ENCODE measurements at regions of chr6 and their contacts with region 1.

Region 1: DNA sequence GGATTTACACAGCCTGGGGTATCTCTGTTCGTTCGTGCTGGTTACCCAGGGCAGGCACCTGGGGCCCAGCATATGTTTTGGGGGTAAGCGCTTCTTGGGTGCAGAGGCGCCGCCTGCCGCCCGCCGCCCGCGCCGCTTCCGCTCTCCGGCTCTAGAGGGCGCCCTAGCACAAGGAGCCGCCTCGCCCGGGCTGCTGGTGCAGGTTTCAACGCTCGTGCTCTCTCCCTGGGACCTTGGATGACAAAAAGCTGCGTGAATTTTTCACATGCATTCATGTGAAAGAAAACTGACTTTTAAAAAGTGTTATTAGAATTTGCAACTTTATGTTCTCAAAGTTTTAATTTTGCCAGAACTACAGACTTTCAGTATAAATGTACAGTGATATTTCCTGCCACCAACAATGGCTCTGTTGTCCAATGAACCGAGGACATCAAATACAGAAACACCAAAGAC is 32.5 kb downstream of the PRR18 start:
- DNase-seq: peak; percentile 7
- ATAC-seq: peak; percentile 85
- H3K4me3 ChIP-seq: no peak overlapping the region
- H3K27ac ChIP-seq: no peak overlapping the region
- H3K4me1 ChIP-seq: no peaks in the 10 kb centered on the region
- H3K27me3 ChIP-seq: no peaks in the 10 kb centered on the region
- CTCF ChIP-seq: peak; percentile 100

Region 2: DNA sequence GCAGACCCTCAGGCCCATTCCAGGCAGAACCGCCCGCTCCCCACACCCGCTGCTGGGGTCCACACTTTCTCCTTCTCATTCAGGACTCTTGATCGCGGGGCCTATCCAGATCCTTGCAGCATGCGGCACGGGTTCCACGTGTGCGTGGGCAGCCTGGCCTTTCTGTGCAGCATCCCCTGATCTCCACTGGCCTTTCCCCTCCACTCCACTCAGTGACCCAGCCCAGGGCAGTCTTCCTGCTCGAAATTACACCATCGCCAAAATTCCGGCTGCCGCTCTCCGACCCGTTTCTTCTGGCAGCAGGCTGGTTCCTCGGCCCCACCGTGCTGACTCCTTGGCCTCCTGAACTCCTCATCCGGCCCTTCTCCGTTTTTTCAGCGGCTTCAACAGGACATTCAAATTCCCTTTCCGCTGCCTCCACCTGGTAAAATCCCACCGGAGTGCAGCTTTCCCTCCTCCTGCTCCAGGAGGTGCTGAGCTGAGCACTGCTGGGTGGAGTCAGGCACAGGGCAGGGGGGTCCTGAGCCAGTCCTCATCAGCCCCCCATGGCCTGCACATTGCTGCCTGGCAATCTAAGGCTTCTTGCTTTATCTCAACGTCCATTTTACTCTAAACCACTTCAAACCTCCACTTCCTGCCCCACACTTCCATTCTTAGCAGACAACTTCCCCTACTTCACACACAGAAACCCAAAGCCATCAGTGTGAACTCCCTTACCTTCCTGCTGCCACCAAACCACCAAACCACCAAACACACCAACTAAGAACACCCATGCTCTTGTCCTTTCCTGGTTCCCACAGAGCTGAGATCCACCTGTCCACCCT is 57.6 kb after region 1 on chr6:
- CTCF ChIA-PET with region 1: no interaction called
- POLR2A ChIA-PET with region 1: no interaction called
- in situ Hi-C with region 1: no loop called
- intact Hi-C with region 1: no loop called
- DNase-seq: no peak
- ATAC-seq: no peak
- H3K4me3 ChIP-seq: no peak overlapping the region
- H3K27ac ChIP-seq: no peak overlapping the region
- H3K4me1 ChIP-seq: no peaks in the 10 kb centered on the region
- H3K27me3 ChIP-seq: no peaks in the 10 kb centered on the region
- CTCF ChIP-seq: no peak

Region 3: DNA sequence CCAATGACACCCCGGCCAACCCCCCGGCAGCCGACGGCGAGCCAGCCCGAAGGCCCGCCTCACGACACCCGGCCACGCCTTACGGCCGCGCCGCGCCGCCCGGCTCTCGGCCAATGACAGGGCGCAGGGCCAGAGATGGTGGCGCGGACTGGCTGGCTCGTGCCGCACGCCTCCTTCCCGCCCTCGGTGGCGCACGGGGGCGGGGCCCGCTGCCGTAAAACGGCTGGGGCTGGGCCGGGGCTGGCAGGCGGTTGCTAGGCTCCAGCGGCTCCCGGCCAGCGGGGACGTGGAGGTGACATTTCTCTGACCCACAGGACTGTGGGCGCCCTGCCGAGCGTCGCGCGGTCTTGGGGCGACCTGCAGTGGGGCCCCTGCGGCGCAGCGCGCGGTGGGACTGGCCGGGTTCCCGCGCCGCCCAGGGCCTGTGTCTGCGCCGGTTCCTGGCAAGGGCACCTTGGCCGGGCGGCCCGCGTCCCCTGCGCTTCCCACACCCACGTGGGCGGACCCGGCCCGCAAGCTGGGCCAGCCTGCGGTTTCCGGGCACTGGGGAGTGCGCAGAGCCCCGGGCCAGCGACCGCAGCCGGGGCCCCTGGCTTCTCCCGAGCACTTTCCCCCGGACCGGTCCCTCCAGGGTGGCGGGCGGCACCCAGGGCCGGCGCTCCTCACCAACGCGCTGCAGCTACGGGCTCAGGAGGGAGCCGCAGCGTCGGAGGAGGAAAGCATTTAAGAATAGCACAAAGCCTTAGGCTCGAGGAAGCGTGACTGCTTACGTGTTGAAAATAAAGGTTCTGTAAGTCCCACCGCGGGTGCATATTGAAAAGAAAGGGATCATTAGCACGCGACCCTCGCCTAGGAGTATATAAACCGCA is 107.4 kb after region 1 on chr6 and contains the start of gene MPC1:
- CTCF ChIA-PET with region 1: interaction called, 3 read pairs
- POLR2A ChIA-PET with region 1: no interaction called
- in situ Hi-C with region 1: no loop called
- intact Hi-C with region 1: loop called (anchors 5 kb)
- DNase-seq: peak; percentile 68
- ATAC-seq: peak; percentile 99
- H3K4me3 ChIP-seq: peak within 1 kb of the TSS; percentile 65 to 93
- H3K27ac ChIP-seq: peak within 1 kb of the TSS; percentile 62
- H3K4me1 ChIP-seq: no peaks in the 10 kb centered on the region
- H3K27me3 ChIP-seq: no peaks in the 10 kb centered on the region; the same call in 1 of the 2 replicates
- CTCF ChIP-seq: no peak
- total RNA-seq, gene MPC1: 7.0 TPM

Region 4: DNA sequence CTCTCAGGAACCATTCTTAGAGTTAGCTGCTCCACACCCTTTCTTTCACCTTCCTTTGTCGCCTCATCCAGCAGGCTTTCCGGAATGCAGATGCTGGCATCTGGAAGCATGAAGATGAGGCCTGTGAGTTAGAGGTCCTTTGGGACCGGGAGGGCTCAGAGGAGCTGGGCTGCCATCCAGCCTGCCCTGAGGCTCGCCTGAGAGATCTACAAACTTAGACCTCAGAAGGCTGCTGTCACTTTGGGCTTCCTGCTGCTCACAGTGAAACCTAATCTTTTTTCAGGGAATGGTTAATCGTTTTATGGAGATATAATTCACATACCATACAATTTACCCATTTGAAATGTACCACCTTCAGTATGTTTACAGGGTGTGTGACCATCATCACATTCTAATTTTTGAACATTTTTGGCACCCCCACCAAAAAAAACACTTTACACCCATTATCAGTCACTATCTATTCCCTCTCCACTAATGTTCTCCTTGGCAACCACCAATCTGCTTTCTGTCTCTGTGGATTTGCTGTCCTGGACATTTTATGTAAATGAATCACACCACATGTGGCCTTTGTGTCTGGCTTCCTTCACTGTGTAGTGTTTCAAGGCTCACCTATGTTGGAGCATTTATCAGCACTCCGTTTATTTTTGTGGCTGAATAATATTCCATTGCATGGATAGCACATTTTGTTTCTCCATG is 127.0 kb after region 1 on chr6:
- CTCF ChIA-PET with region 1: interaction called, 10 read pairs
- POLR2A ChIA-PET with region 1: no interaction called
- in situ Hi-C with region 1: no loop called
- intact Hi-C with region 1: loop called (anchors 1 kb)
- DNase-seq: no peak
- ATAC-seq: no peak
- H3K4me3 ChIP-seq: no peak overlapping the region
- H3K27ac ChIP-seq: no peak overlapping the region
- H3K4me1 ChIP-seq: no peaks in the 10 kb centered on the region
- H3K27me3 ChIP-seq: no peaks in the 10 kb centered on the region
- CTCF ChIP-seq: no peak

Region 5: DNA sequence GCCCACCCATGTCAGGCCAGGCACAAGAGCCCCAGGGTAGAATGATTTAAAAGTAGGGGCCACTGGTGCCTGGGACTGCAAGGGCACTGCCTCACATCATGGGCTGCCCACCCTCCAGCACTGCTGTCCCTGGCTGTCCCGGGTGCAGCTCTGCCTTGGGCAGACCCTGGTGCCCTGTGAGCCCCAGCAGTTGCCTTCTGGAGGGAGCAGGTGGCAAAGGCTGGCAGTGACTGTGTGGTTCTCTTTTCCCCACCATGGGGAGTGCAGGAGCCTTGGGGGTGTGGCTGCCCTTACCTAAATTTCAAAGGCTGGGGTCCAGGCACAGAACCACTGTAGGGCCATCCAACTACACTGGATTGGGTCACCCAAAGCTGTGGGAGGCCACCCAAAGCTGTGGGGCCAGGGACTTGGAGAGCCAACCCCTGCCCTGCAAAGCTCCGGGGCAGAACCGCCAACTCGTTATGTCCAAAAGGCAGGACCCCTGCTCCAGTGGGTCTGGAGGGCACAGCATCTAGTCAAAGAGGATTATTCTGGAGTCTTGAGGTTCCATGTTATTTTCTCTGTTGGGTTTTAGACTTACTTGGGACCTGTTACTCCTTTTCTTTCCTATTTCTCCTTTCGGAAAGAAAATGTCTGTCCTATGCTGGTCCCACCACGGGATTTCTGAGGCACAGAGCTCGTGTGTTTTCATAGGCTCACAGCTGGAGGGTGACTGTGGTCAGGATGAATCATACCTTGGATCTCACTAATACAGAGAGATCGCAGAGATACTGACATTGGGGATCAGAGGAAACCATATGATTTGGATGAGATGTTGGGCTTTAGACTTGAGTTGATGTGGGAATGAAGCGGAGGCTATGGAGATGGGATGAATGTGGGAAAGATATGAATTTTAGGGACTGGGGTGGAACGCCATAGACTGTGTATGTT is 245.4 kb after region 1 on chr6:
- CTCF ChIA-PET with region 1: no interaction called
- POLR2A ChIA-PET with region 1: no interaction called
- in situ Hi-C with region 1: no loop called
- intact Hi-C with region 1: no loop called
- DNase-seq: no peak
- ATAC-seq: no peak
- H3K4me3 ChIP-seq: no peak overlapping the region
- H3K27ac ChIP-seq: no peak overlapping the region
- H3K4me1 ChIP-seq: no peaks in the 10 kb centered on the region
- H3K27me3 ChIP-seq: no peaks in the 10 kb centered on the region
- CTCF ChIP-seq: no peak